Caco-2 (cell line): ENCODE measurements at regions of chr16 and their contacts with region 1.

Region 1: GRCh38 chr16:50467943-50468760 is 80.0 kb upstream of the NKD1 start:
- DNase-seq: peak; percentile 93 to 95
- H3K4me3 ChIP-seq: peak overlapping the region; percentile 43
- H3K4me3 Mint-ChIP-seq: peak overlapping the region; percentile 74
- H3K27ac Mint-ChIP-seq: peak overlapping the region; percentile 93
- H3K4me1 ChIP-seq: peaks cover 66% of the 10 kb centered on the region
- H3K4me1 Mint-ChIP-seq: peaks cover 35% of the 10 kb centered on the region
- H3K27me3 ChIP-seq: no peaks in the 10 kb centered on the region
- H3K27me3 Mint-ChIP-seq: no peaks in the 10 kb centered on the region
- CTCF ChIP-seq: no peak

Region 2: DNA sequence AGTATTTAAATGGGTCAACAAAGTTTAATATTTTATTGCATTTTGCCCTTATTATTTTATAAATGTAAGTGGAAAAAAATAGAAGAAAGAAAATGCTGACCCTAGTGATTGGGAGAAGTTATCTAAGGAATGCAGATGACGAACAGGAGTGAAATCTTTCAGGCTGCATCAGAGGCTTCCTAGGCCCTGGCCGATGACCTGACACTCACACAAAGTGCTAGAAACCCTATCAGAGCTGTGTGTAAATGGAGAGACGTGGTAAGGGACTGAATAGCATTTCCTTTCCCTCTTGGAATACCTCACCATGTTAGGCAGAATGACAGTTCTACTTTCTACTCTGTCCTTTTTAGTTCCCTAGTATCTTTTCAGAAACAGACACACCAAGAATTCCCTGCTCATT is 488.0 kb before region 1 on chr16:
- CTCF ChIA-PET with region 1: no interaction called
- POLR2A ChIA-PET with region 1: interaction called, 11 read pairs
- intact Hi-C with region 1: no loop called
- DNase-seq: peak in 1 of 2 experiments; percentile 17
- H3K4me3 ChIP-seq: no peak overlapping the region
- H3K4me3 Mint-ChIP-seq: no peak overlapping the region
- H3K27ac Mint-ChIP-seq: no peak overlapping the region
- H3K4me1 ChIP-seq: 0 out of 2 replicates have a peak, but pooled peaks cover 6% of the 10 kb centered on the region
- H3K4me1 Mint-ChIP-seq: no peaks in the 10 kb centered on the region
- H3K27me3 ChIP-seq: no peaks in the 10 kb centered on the region
- H3K27me3 Mint-ChIP-seq: no peaks in the 10 kb centered on the region
- CTCF ChIP-seq: no peak

Region 3: DNA sequence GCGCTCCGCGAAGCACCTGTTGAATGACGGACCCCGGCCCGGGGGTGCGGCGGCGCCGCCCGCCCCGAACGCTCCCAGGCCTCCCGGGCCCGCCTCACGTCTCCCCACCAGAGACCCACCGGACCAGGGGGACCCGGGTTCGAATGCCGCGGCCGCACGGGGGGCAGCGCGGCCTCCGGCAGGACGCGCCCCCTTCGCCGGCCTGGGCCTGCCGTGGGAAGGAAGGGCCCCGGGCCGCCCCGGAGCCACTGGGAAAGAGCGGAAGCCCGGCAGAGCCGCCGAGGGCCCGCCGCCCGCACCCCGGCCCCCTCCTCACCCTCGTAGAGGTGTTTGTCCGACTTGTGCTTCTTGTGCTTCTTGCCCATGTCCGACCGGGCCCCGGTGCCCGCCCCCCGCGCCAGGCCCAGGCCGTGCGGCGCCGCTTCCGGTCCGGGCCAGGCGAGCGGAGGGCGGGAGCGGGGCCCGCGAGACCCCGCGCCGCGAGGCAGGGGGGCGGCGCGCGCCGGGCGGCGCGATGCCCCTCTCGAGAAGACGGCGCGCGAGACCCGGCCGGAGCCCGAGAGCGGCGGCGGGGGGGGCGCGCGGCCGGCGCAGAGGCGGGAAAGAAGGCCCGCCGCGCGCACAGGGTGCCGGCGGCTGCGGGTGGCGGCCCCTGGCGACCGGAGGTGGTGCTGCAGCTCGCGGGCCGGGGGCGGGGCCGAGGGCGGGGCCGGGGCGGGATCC is 99.6 kb before region 1 on chr16 and contains the start of gene BRD7:
- CTCF ChIA-PET with region 1: no interaction called
- POLR2A ChIA-PET with region 1: interaction called, 5 read pairs
- intact Hi-C with region 1: loop called (anchors 5 kb)
- DNase-seq: peak in 1 of 2 experiments; percentile 86
- H3K4me3 ChIP-seq: peak within 1 kb of the TSS; percentile 55
- H3K4me3 Mint-ChIP-seq: peak within 1 kb of the TSS; percentile 90
- H3K27ac Mint-ChIP-seq: peak within 1 kb of the TSS; percentile 72
- H3K4me1 ChIP-seq: peaks cover 20% of the 10 kb centered on the region
- H3K4me1 Mint-ChIP-seq: peaks cover 30% of the 10 kb centered on the region
- H3K27me3 ChIP-seq: no peaks in the 10 kb centered on the region
- H3K27me3 Mint-ChIP-seq: no peaks in the 10 kb centered on the region
- CTCF ChIP-seq: peak; percentile 43 to 69
- total RNA-seq, gene BRD7: 147 and 170 TPM in 2 replicates